ENCODE measurements at regions of chr1 and their contacts with region 1.

Region 1: GRCh38 chr1:25819576-25820246 is at the start of gene MTFR1L:
- DNase-seq: peak; percentile 83
- ATAC-seq: peak; percentile 89
- H3K4me3 ChIP-seq: peak within 1 kb of the TSS; percentile 90 to 94 (median 94)
- H3K27ac ChIP-seq: peak within 1 kb of the TSS; percentile 98
- H3K4me1 ChIP-seq: peaks cover 33% of the 10 kb centered on the region
- H3K27me3 ChIP-seq: no peaks in the 10 kb centered on the region; a peak in 1 of 5 replicates
- CTCF ChIP-seq: no peak
- EP300 ChIP-seq: no peak
- POLR2A ChIP-seq: peak; percentile 79 to 92
- RAD21 ChIP-seq: peak; percentile 27; the same call in 1 of the 2 replicates
- total RNA-seq, gene MTFR1L: 38.0 and 47.5 TPM in 2 replicates

Region 2: GRCh38 chr1:25616095-25616986 is 203.4 kb before region 1 on chr1 and contains the start of gene MAN1C1:
- CTCF ChIA-PET with region 1: no interaction called
- POLR2A ChIA-PET with region 1: no interaction called
- in situ Hi-C with region 1: loop called (anchors 25 kb)
- intact Hi-C with region 1: no loop called
- DNase-seq: peak; percentile 71
- ATAC-seq: peak; percentile 89
- H3K4me3 ChIP-seq: peak within 1 kb of the TSS; percentile 58 to 75 (median 61)
- H3K27ac ChIP-seq: no peak within 1 kb of the TSS
- H3K4me1 ChIP-seq: peaks cover 11% of the 10 kb centered on the region
- H3K27me3 ChIP-seq: peaks cover 12 to 45% of the 10 kb centered on the region in 2 experiments
- CTCF ChIP-seq: peak; percentile 41
- EP300 ChIP-seq: no peak
- POLR2A ChIP-seq: no peak
- RAD21 ChIP-seq: peak; percentile 40; the same call in 1 of the 2 replicates
- total RNA-seq, gene MAN1C1: 0.15 and 0.49 TPM in 2 replicates

Region 3: DNA sequence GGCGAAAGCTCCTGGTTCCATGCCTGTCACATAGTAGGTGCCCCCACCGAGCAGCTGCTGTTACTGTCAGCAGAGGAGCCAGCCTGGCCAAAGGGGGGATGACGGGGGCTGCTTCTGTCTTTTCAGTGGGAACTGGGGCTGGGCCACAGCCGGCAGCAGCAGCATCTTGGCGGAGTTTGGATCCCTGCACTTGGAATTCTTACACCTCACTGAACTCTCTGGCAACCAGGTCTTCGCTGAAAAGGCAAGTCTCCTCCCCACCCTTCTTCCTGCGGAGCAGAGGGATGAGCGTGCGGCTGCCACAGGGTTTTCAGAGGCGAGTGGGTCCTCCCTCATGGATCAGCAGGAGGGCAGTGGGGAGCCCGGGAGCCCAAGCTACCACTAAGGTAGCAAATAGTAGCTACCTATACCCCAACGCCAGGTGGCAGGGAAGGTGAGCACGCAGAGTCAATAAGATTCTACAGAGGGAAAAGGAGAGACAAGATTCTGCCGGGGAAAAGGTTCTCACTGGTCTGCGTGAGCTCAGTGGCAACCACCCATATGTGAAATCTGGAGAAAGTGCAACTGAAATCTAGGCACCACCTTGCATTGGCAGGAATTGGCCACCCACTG is 61.1 kb before region 1 on chr1:
- CTCF ChIA-PET with region 1: no interaction called
- POLR2A ChIA-PET with region 1: no interaction called
- in situ Hi-C with region 1: no loop called
- intact Hi-C with region 1: no loop called
- DNase-seq: peak; percentile 13
- ATAC-seq: peak; percentile 68
- H3K4me3 ChIP-seq: no peak overlapping the region
- H3K27ac ChIP-seq: no peak overlapping the region
- H3K4me1 ChIP-seq: no peaks in the 10 kb centered on the region
- H3K27me3 ChIP-seq: peaks cover 6 to 61% of the 10 kb centered on the region in 2 experiments
- CTCF ChIP-seq: peak; percentile 45
- EP300 ChIP-seq: no peak
- POLR2A ChIP-seq: no peak
- RAD21 ChIP-seq: no peak

Region 4: DNA sequence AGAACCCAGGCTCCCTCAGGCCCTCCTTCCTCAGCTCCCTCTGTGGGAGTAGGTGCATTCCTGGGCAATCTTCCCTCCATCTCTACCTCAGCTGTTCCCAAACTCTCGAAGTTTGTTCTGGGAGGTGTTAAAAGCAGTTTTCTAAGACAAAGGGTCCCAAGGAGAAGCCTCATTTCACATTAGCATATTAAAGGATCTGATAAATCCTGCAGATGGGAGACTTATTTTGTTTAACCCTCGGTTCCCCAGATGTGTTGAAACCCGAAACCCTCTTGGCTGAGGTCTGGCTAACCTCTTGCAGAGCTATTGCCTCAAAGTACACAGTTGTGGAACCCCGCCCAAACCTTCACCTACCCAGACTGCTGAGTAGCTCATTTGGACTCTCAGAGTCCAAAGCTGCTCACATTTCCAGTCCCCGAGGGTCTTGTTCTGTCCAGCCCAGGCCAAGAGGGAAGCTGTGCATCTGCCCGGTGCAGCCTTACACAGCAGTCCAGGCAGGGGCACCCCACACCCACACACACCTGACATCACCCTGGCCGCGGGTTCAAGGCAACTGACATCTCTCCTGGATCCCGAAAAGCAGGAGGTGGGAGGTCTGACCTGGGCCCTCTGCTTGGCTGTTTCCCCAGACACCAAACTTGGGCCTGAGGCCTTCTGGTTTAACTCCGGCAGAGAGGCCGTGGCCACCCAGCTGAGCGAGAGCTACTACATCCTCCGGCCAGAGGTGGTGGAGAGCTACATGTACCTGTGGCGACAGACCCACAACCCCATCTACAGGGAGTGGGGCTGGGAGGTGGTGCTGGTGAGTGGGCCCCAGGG is 39.2 kb before region 1 on chr1:
- CTCF ChIA-PET with region 1: no interaction called
- POLR2A ChIA-PET with region 1: no interaction called
- in situ Hi-C with region 1: no loop called
- intact Hi-C with region 1: no loop called
- DNase-seq: peak; percentile 34
- ATAC-seq: peak; percentile 81
- H3K4me3 ChIP-seq: no peak overlapping the region; a peak in 1 of 6 replicates
- H3K27ac ChIP-seq: no peak overlapping the region
- H3K4me1 ChIP-seq: peaks cover 29% of the 10 kb centered on the region
- H3K27me3 ChIP-seq: peaks cover 0 to 32% of the 10 kb centered on the region in 2 experiments; a peak in 4 of 5 replicates
- CTCF ChIP-seq: peak; percentile 25; the same call in 1 of the 2 replicates
- EP300 ChIP-seq: no peak
- POLR2A ChIP-seq: no peak
- RAD21 ChIP-seq: no peak

Measured in HepG2 (cell line).